ENCODE measurements at regions of chr6 and their contacts with region 1.

Region 1: DNA sequence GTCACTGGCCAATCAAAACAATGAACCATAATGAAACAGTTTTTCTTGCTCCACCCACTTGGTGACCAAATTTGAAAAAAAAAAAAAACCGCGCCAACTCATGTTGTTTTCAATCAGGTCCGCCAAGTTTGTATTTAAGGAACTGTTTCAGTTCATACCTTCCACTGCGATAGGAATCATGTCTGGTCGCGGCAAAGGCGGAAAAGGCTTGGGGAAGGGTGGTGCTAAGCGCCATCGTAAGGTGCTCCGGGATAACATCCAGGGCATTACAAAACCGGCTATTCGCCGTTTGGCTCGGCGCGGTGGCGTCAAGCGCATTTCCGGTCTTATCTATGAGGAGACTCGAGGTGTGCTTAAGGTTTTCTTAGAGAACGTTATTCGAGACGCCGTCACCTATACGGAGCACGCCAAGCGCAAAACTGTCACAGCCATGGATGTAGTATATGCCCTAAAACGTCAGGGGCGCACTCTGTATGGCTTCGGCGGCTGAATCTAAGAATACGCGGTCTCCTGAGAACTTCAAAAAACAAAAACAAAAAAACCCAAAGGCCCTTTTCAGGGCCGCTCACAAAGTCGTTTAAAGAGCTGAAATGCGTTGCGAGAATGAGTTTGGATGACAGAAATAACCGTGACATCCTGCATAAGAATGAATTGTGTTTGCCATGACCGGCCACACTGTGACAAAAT is 16.7 kb downstream of the HFE start:
- DNase-seq: peak; percentile 82 to 95 (median 89)
- ATAC-seq: peak; percentile 87 to 92 (median 90)
- H3K4me3 ChIP-seq: peak overlapping the region; percentile 40 to 68
- H3K4me3 Mint-ChIP-seq: peak overlapping the region; percentile 78 to 91 (median 89)
- H3K27ac ChIP-seq: peak overlapping the region; percentile 85
- H3K27ac Mint-ChIP-seq: peak overlapping the region; percentile 96 to 99
- H3K4me1 ChIP-seq: peaks cover 7 to 12% of the 10 kb centered on the region in 2 experiments
- H3K4me1 Mint-ChIP-seq: peaks cover 15 to 18% (median 16%) of the 10 kb centered on the region in 3 donors
- H3K27me3 ChIP-seq: peaks cover 0 to 4% of the 10 kb centered on the region in 2 experiments
- H3K27me3 Mint-ChIP-seq: peaks cover 0 to 3% of the 10 kb centered on the region in 2 donors

Region 2: DNA sequence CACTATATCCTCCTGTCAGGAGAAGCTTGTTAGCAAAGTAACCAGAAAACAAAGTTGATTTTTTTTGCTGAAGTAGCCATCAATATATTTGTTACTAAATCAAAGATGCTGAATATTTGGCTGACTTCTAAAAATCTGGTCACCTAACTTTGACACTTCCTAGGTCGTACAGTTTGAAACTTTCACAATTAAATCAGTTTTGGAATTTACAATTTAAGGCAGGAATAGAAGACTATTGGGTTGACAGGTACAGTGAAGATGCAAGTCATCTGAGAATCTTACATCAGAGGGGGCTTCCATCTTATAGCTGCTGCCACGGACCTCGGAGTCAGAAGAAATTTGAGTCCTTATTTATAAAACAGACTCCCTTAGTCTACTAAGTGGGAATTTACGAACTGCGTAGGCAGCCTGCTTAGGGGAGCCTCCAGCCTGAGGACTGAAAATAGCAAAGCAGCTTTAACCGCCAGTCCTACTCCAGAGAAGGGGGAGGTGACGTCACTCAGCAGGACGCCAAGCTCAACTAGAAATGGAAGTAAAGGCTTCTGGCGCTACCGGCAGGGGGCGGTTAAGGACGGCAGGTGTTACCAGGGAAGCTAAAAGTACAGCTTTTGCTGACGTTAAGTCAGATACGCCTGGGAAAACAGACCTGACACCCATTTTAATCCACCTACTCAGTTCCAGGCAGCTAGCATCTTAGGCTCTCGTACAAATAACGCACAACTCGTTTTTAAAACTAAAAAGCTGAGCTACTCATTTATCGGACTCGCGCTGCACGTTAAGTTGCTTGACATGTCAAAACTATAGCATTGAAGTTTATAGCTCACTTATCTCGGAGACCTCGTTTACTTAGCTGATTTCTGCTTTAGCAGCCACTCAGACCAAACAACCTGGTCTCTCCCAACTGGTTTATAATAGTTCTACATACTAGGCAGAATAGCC is 77.8 kb before region 1 on chr6:
- CTCF ChIA-PET with region 1: interaction called in 1 of 2 experiments, 8 read pairs
- POLR2A ChIA-PET with region 1: interaction called, 5 to 11 read pairs
- DNase-seq: peak; percentile 70 to 98 (median 96)
- ATAC-seq: peak; percentile 33 to 46 (median 36)
- H3K4me3 ChIP-seq: peak overlapping the region; percentile 63 to 88
- H3K4me3 Mint-ChIP-seq: peak overlapping the region; percentile 82 to 93 (median 92)
- H3K27ac ChIP-seq: peak overlapping the region; percentile 93
- H3K27ac Mint-ChIP-seq: peak overlapping the region; percentile 93 to 99
- H3K4me1 ChIP-seq: peaks cover 22 to 24% of the 10 kb centered on the region in 2 experiments
- H3K4me1 Mint-ChIP-seq: peaks cover 43 to 53% (median 44%) of the 10 kb centered on the region in 3 donors
- H3K27me3 ChIP-seq: no peaks in the 10 kb centered on the region
- H3K27me3 Mint-ChIP-seq: peaks cover 0 to 2% of the 10 kb centered on the region in 2 donors

Region 3: DNA sequence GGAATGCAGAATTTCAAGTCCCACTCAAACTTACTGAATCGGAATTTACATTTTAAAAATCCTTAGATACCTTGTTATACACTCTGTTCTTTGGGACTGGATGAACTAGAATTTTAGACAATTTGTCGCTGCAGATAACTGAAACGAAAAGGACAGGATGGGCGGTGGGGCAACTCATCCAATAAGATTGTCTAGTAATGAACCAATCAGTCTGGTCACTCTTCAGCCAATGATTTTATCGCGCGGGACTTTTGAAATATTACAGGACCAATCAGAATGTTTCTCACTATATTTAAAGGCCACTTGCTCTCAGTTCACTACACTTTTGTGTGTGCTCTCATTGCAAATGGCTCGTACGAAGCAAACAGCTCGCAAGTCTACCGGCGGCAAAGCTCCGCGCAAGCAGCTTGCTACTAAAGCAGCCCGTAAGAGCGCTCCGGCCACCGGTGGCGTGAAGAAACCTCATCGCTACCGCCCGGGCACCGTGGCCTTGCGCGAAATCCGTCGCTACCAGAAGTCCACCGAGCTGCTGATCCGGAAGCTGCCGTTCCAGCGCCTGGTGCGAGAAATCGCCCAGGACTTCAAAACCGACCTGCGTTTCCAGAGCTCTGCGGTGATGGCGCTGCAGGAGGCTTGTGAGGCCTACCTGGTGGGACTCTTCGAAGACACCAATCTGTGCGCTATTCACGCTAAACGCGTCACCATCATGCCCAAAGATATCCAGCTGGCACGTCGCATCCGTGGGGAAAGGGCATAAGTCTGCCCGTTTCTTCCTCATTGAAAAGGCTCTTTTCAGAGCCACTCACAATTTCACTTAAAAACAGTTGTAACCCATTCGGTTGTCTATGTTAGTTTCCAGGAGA is 58.6 kb before region 1 on chr6:
- CTCF ChIA-PET with region 1: interaction called in 1 of 2 experiments, 3 read pairs
- POLR2A ChIA-PET with region 1: interaction called in 1 of 2 experiments, 15 read pairs
- DNase-seq: peak; percentile 45 to 90 (median 78)
- ATAC-seq: peak; percentile 63 to 66 (median 64)
- H3K4me3 ChIP-seq: peak overlapping the region; percentile 77 to 83
- H3K4me3 Mint-ChIP-seq: peak overlapping the region; percentile 84 to 91 (median 90)
- H3K27ac ChIP-seq: peak overlapping the region; percentile 90
- H3K27ac Mint-ChIP-seq: peak overlapping the region; percentile 98
- H3K4me1 ChIP-seq: peaks cover 5 to 26% of the 10 kb centered on the region in 2 experiments
- H3K4me1 Mint-ChIP-seq: peaks cover 15 to 27% (median 26%) of the 10 kb centered on the region in 3 donors
- H3K27me3 ChIP-seq: no peaks in the 10 kb centered on the region
- H3K27me3 Mint-ChIP-seq: no peaks in the 10 kb centered on the region

Region 4: GRCh38 chr6:26065952-26066380 is 37.9 kb before region 1 on chr6:
- CTCF ChIA-PET with region 1: interaction called, 17 to 71 read pairs
- POLR2A ChIA-PET with region 1: no interaction called
- DNase-seq: peak in 30 of 35 experiments; percentile 26 to 84 (median 41)
- ATAC-seq: peak; percentile 85 to 88 (median 86)
- H3K4me3 ChIP-seq: no peak overlapping the region
- H3K4me3 Mint-ChIP-seq: no peak overlapping the region
- H3K27ac ChIP-seq: no peak overlapping the region
- H3K27ac Mint-ChIP-seq: no peak overlapping the region
- H3K4me1 ChIP-seq: peaks cover 0 to 3% of the 10 kb centered on the region in 2 experiments
- H3K4me1 Mint-ChIP-seq: peaks cover 5 to 10% (median 10%) of the 10 kb centered on the region in 3 donors
- H3K27me3 ChIP-seq: no peaks in the 10 kb centered on the region
- H3K27me3 Mint-ChIP-seq: no peaks in the 10 kb centered on the region

Region 5: GRCh38 chr6:26175428-26176181 is 71.7 kb after region 1 on chr6:
- CTCF ChIA-PET with region 1: no interaction called
- POLR2A ChIA-PET with region 1: interaction called in 1 of 2 experiments, 10 read pairs
- DNase-seq: peak in 24 of 35 experiments; percentile 30 to 85 (median 50)
- ATAC-seq: no peak
- H3K4me3 ChIP-seq: no peak overlapping the region
- H3K4me3 Mint-ChIP-seq: peak overlapping the region in 1 of 3 donors; percentile 5
- H3K27ac ChIP-seq: peak overlapping the region; percentile 37
- H3K27ac Mint-ChIP-seq: peak overlapping the region; percentile 58 to 73
- H3K4me1 ChIP-seq: peaks cover 11 to 15% of the 10 kb centered on the region in 2 experiments
- H3K4me1 Mint-ChIP-seq: peaks cover 36 to 39% (median 37%) of the 10 kb centered on the region in 3 donors
- H3K27me3 ChIP-seq: no peaks in the 10 kb centered on the region
- H3K27me3 Mint-ChIP-seq: no peaks in the 10 kb centered on the region

Region 6: DNA sequence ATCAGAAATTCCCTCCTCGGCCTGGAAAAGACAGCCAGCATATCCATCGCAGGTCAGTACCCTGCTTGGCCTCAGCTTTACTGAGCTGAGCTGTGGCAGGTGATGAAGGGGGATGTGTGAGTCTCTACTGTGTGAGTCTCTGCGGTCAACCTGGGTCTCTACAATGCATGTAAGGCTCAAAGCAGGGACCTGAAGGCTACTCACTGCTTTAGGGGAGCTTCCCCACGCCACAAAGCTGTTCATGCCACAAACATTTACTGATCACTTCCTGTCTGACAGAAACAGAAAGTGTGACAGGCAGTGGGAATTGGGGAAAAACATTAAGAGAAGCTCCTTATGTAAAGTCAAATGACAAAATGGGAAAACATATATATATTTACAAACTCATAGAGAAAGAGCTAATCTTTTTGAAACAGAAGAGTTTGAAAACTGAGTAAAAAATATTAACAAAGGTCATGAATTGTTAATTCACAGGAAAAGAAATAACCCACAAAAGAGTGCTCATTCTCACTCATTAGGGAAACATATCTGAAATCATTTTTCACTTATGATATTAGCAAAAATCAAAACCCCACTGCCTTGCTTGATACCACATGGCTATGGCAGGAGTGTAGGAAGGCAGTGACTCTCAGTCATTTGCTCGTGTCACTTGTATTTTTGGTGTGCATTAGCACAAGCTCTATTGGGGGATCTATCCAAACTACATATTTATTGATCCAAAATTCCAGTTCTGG is 342.2 kb after region 1 on chr6:
- CTCF ChIA-PET with region 1: no interaction called
- POLR2A ChIA-PET with region 1: interaction called in 1 of 2 experiments, 10 read pairs
- DNase-seq: peak in 10 of 35 experiments; percentile 2 to 62 (median 8)
- ATAC-seq: peak; percentile 65 to 71 (median 67)
- H3K4me3 ChIP-seq: no peak overlapping the region
- H3K4me3 Mint-ChIP-seq: peak overlapping the region; percentile 47 to 75 (median 49)
- H3K27ac ChIP-seq: peak overlapping the region; percentile 60
- H3K27ac Mint-ChIP-seq: peak overlapping the region; percentile 83 to 85
- H3K4me1 ChIP-seq: peaks cover 26 to 43% of the 10 kb centered on the region in 2 experiments
- H3K4me1 Mint-ChIP-seq: peaks cover 59 to 78% (median 61%) of the 10 kb centered on the region in 3 donors
- H3K27me3 ChIP-seq: no peaks in the 10 kb centered on the region
- H3K27me3 Mint-ChIP-seq: no peaks in the 10 kb centered on the region